ENCODE measurements at regions of chr1 and their contacts with region 1.

Region 1: DNA sequence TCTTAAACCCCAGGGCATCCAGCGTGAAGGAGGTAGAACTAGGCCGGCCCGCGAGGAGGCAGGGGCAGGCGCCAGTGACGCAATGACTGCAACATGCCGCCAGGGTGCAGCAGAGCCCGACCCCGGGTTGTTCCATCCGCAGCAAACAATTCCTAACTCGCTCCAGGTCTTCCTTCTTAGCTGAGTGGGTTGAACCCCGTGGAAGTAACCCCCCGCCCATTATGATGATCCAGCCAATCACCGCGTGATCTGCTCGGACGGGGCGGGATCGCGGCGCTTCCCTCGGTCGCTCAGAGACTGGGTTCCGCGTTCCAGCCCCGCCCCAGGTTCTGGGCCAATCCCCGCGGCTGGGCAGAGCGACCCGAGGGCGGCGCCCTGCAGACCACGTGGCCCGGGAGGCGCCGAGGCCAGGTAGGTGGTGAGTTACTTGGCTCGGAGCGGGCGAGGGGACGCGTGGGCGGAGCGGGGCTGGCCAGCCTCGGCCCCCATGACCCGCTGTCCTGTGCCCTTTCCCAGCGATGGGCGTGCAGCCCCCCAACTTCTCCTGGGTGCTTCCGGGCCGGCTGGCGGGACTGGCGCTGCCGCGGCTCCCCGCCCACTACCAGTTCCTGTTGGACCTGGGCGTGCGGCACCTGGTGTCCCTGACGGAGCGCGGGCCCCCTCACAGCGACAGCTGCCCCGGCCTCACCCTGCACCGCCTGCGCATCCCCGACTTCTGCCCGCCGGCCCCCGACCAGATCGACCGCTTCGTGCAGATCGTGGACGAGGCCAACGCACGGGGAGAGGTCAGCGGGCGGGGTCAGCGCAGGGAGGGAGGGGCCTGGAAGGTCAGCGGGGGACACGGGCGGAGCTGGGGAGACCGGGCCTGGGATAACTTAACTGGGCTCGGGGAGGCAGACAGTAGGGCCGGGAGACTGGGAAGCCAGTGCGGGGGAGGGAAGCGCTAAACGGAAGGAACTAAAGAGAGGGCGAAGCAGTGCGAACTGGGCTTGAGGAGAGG is at the start of gene DUSP23:
- DNase-seq: peak; percentile 99
- H3K4me3 ChIP-seq: peak within 1 kb of the TSS; percentile 65 to 80 (median 72)
- H3K27ac ChIP-seq: peak within 1 kb of the TSS; percentile 77 to 87 (median 82)
- H3K4me1 ChIP-seq: peaks cover 0 to 12% (median 6%) of the 10 kb centered on the region in 4 donors
- H3K27me3 ChIP-seq: no peaks in the 10 kb centered on the region
- CTCF ChIP-seq: peak; percentile 92 to 98 (median 94)
- EP300 ChIP-seq: peak in 2 of 4 donors; percentile 16 to 42
- POLR2A ChIP-seq: peak; percentile 57
- total RNA-seq, gene DUSP23: 40.4 to 59.1 (median 51.6) TPM

Region 2: GRCh38 chr1:159587461-159587951 is 193.4 kb before region 1 on chr1 and contains the start of gene APCS:
- intact Hi-C with region 1: no loop called
- DNase-seq: no peak
- H3K4me3 ChIP-seq: no peak within 1 kb of the TSS
- H3K27ac ChIP-seq: no peak within 1 kb of the TSS
- H3K4me1 ChIP-seq: no peaks in the 10 kb centered on the region
- H3K27me3 ChIP-seq: no peaks in the 10 kb centered on the region
- CTCF ChIP-seq: no peak
- EP300 ChIP-seq: no peak
- POLR2A ChIP-seq: no peak
- total RNA-seq, gene APCS: not detected

Region 3: GRCh38 chr1:159891275-159892157 is 110.6 kb after region 1 on chr1:
- intact Hi-C with region 1: loop called (anchors 1 kb)
- DNase-seq: peak; percentile 88
- H3K4me3 ChIP-seq: no peak overlapping the region
- H3K27ac ChIP-seq: no peak overlapping the region
- H3K4me1 ChIP-seq: peaks cover 0 to 5% (median 0%) of the 10 kb centered on the region in 4 donors
- H3K27me3 ChIP-seq: no peaks in the 10 kb centered on the region
- CTCF ChIP-seq: peak; percentile 90 to 98 (median 94)
- EP300 ChIP-seq: no peak
- POLR2A ChIP-seq: no peak

Region 4: DNA sequence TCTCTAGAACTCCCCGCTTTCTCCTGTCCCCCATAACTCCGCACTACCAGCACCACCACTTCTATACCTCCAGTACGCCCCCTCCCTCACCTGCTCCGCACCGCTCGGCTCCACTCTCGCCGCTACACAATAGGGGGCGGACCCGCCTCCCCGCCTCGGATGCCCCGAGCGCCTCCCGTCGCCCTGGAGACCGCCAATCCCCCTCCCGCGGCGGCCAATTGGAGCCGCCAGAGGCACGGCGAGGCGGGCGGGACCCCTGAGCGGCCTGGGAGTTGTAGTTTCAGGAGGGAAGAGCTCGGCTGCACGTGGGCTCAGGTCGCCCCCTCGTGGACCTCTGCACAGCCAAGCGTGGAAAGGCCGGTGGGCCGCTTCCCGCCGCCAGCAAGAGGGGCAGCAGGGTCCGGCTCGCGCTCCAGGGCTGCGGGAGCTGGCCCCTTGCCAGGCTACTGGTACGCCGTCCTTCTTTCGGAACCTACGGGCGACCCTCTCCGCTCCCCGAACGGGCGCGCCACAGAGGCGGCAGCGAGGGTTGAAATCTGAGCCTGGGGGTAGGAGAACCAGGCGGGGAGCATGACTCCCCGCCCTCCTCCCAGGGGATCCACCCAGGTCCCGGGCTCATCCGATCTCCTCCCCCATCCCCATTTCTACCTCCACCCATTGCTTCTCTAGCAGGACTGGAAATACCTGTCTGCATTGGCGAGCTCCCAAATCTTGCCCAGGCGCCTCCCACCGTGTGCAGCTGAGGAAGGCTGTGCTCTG is 164.8 kb after region 1 on chr1 and contains the start of gene IGSF9:
- intact Hi-C with region 1: loop called (anchors 5 kb)
- DNase-seq: peak; percentile 90
- H3K4me3 ChIP-seq: peak within 1 kb of the TSS; percentile 18 to 51 (median 46)
- H3K27ac ChIP-seq: peak within 1 kb of the TSS in 2 of 4 donors; percentile 17 to 21
- H3K4me1 ChIP-seq: peaks cover 0 to 30% (median 20%) of the 10 kb centered on the region in 4 donors
- H3K27me3 ChIP-seq: no peaks in the 10 kb centered on the region
- CTCF ChIP-seq: peak in 3 of 4 experiments; percentile 29 to 52 (median 36)
- EP300 ChIP-seq: no peak
- POLR2A ChIP-seq: no peak
- total RNA-seq, gene IGSF9: under 0.01 TPM in 1 of 4 donors, not detected in the others

Region 5: DNA sequence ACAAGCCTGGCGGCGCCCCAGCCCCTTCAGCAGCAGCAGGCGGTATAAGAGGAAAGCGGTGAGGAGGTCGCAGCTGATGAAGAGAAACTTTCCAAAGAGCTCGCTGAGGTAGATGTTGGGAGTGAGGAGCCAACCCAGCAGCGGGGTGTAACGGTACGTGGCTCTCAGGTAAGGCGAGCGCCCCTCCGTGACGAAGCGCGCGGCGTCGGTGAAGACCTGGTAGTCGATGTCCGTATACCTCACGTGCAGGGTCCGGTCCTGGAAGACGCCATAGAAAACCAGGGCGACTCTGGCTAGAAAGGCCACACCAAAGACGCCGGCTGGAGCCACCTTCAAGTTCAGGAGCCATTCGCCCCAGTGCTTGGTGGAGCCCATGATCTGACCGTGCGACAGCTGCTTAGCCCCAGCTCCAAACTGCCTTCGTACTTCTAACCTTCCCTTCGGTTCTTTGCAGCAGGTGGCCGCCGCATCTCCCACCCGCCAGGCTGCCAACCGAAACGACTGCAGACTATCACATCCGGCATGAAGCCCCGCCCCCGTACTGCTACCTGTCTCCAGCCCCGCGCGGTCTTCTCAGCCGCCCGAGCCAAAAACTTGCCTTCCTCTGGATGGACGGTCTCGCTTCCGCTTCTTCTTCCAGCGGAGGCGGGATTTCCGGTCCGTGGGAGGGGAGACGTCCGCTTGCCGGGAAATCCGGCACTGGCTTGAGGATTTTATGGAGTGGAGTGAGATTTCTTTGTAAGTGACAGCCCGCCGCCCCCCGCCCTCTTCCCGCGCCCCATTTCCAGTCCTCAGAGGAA is 250.7 kb after region 1 on chr1 and contains the start of gene PIGM:
- intact Hi-C with region 1: loop called (anchors 1 kb)
- DNase-seq: peak; percentile 97
- H3K4me3 ChIP-seq: peak within 1 kb of the TSS; percentile 76 to 86 (median 82)
- H3K27ac ChIP-seq: peak within 1 kb of the TSS; percentile 73 to 82 (median 79)
- H3K4me1 ChIP-seq: peaks cover 0 to 29% (median 23%) of the 10 kb centered on the region in 4 donors
- H3K27me3 ChIP-seq: no peaks in the 10 kb centered on the region
- CTCF ChIP-seq: no peak
- EP300 ChIP-seq: peak in 1 of 4 donors; percentile 9
- POLR2A ChIP-seq: peak in 1 of 2 donors; percentile 29
- total RNA-seq, gene PIGM: 3.3 to 4.7 (median 4.5) TPM

Region 6: DNA sequence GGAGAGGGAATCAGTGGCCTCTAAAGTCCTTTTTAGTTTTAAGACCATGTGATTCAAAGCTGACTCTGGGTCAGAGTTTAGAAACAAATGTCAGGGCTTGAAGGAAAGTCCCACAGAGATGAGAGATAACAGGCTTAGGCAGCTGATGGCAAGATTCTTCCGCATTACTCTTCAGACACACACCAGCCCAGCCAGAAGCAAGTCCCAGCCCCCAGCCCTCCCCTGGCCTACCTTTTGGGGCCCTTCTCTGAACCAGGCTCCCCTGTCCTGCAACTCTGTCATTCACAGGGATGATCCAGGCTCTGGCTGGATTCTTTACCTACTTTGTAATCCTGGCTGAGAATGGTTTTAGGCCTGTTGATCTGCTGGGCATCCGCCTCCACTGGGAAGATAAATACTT is 396.3 kb after region 1 on chr1:
- intact Hi-C with region 1: no loop called
- DNase-seq: no peak
- H3K4me3 ChIP-seq: no peak overlapping the region
- H3K27ac ChIP-seq: no peak overlapping the region
- H3K4me1 ChIP-seq: no peaks in the 10 kb centered on the region
- H3K27me3 ChIP-seq: no peaks in the 10 kb centered on the region
- CTCF ChIP-seq: no peak
- EP300 ChIP-seq: no peak
- POLR2A ChIP-seq: no peak